ENCODE measurements at regions of chrX and their contacts with region 1.

Region 1: GRCh38 chrX:39331082-39331704 is 529.9 kb downstream of the MID1IP1 start:
- DNase-seq: peak; percentile 65
- H3K4me3 Mint-ChIP-seq: peak overlapping the region; percentile 75
- H3K27ac Mint-ChIP-seq: peak overlapping the region; percentile 91
- H3K4me1 Mint-ChIP-seq: peaks cover 63% of the 10 kb centered on the region
- H3K27me3 Mint-ChIP-seq: no peaks in the 10 kb centered on the region

Region 2: GRCh38 chrX:39162322-39162735 is 168.9 kb before region 1 on chrX:
- intact Hi-C with region 1: loop called (anchors 5 kb)
- DNase-seq: peak; percentile 71
- H3K4me3 Mint-ChIP-seq: peak overlapping the region; percentile 64
- H3K27ac Mint-ChIP-seq: peak overlapping the region; percentile 78
- H3K4me1 Mint-ChIP-seq: peaks cover 39% of the 10 kb centered on the region
- H3K27me3 Mint-ChIP-seq: peaks cover 2% of the 10 kb centered on the region

Region 3: GRCh38 chrX:39261446-39262147 is 69.6 kb before region 1 on chrX:
- intact Hi-C with region 1: loop called (anchors 2 kb)
- DNase-seq: peak; percentile 74
- H3K4me3 Mint-ChIP-seq: no peak overlapping the region
- H3K27ac Mint-ChIP-seq: peak overlapping the region; percentile 78
- H3K4me1 Mint-ChIP-seq: peaks cover 34% of the 10 kb centered on the region
- H3K27me3 Mint-ChIP-seq: no peaks in the 10 kb centered on the region

Region 4: DNA sequence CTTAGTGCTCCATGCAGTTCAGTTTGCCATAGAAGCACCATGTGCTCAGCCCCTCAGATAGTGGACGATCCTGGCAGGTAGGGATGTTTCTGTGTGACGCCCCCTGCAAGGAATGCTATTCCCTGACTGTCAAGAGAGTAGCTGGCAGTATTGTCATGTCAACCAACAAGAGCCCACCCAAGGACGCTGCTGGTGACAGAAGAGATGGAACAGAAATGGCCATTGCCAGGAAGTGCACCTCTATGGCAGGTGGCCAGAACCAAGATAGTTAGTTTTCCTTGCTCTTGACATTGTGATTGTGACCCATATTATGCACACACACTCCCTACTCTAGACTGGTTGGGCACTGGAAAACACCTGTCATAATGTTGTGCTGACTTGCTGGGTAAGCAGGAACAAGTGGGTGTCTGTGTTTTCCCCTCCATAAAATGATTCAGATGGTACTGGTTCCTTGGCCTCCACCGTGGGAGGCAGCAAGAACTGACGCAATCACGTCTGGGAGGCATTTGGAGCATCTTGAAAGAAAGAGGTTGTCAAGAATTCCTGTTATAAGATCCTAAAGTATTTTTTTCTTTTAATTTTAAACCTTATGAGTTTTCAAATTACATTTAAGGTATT is 22.1 kb before region 1 on chrX:
- intact Hi-C with region 1: loop called (anchors 1 kb)
- DNase-seq: peak; percentile 74
- H3K4me3 Mint-ChIP-seq: peak overlapping the region; percentile 54
- H3K27ac Mint-ChIP-seq: peak overlapping the region; percentile 100
- H3K4me1 Mint-ChIP-seq: peaks cover 50% of the 10 kb centered on the region
- H3K27me3 Mint-ChIP-seq: no peaks in the 10 kb centered on the region

Region 5: DNA sequence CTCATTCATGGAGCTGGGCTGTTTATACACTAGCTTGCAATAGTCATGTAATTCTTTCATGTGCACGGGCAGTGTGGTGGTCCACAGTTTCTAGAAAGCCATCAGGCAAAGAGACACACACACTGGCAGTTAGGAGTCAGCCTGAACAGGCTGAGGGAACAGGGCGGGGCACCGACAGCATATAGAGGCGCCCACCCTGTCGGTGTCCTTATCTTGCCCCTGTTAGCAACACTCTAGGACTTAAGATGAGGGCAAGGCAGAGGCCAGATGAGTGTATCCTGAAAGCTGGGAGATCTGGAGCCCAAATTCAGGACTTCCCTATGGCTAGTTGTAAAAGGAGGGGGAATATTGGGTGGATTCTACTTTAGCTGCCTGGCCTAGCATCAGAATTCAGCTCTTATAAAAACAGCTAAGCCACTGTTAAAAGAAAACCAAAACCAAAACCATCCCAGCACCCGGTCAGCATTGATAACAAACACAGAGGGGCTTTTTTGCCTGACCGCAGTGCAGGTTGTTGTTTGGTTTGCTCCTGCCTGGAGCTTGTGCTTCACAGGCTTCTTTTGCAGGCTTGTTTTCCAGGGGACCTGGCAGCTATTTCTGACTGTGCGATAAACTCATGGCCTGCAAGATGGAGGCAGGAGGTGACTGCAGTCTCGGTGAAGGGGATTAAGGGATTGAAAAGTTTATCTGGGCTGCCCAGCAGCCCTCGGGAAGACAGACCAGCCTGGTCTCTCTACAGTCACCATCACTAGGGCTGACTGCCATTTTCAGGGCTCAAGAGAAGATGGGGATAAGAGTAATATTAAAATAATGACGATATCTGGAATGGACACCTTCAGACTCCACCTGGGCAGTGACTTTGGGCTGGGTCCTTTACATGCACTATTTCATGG is 109.0 kb after region 1 on chrX:
- intact Hi-C with region 1: loop called (anchors 1 kb)
- DNase-seq: peak; percentile 76
- H3K4me3 Mint-ChIP-seq: peak overlapping the region; percentile 62
- H3K27ac Mint-ChIP-seq: peak overlapping the region; percentile 96
- H3K4me1 Mint-ChIP-seq: peaks cover 47% of the 10 kb centered on the region
- H3K27me3 Mint-ChIP-seq: no peaks in the 10 kb centered on the region

Region 6: GRCh38 chrX:39578354-39578869 is 247.2 kb after region 1 on chrX:
- intact Hi-C with region 1: loop called (anchors 2 kb)
- DNase-seq: peak; percentile 76
- H3K4me3 Mint-ChIP-seq: peak overlapping the region; percentile 60
- H3K27ac Mint-ChIP-seq: peak overlapping the region; percentile 91
- H3K4me1 Mint-ChIP-seq: peaks cover 23% of the 10 kb centered on the region
- H3K27me3 Mint-ChIP-seq: no peaks in the 10 kb centered on the region

Region 7: DNA sequence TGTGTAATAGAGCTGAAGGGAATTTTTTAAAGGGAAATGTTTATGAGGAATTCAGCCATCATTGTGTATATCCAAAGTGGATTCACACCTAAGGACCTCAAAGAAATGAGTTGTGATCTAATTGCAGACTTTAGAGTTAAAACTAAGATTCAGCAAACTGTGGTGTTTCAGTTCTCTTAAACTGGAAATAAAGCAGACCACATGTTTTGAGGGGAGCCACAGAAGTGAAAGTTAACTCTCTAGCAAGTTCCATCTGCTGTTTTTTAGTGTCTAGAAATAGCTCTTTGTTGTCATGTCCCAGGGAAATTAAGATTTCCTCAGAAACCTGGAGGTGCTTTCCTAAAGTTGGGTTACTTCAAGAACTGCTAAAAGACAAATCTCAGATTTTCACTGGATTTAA is 1905.4 kb after region 1 on chrX:
- intact Hi-C with region 1: no loop called
- DNase-seq: peak; percentile 56
- H3K4me3 Mint-ChIP-seq: no peak overlapping the region
- H3K27ac Mint-ChIP-seq: no peak overlapping the region
- H3K4me1 Mint-ChIP-seq: peaks cover 4% of the 10 kb centered on the region
- H3K27me3 Mint-ChIP-seq: no peaks in the 10 kb centered on the region